ENCODE measurements at regions of chr6 and their contacts with region 1.

Region 1: DNA sequence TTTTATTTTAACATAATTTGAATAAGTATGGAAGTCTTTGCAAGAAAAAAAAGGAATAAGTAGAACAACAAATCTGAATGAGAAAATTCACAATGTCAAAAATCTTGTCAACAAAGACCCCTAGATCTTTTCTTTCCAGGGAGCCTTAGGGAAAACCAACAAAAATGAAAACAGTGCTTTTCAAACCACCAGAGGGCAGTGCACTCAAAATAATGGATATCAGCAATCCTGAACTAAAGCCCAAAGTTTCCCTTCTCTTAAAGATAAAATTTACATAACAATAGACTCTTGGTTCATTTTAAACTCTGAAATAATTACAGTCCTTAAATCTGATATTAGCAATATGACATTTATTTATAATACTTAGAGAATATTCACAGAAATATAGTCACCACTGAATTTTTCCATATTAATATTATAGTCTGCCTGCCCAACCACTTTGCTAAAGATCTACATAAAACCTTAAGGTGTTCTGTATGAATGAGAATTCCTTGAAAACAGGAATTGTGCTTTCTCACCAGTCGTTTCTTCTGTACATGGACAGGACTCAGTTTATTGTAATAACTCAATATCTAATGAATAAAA is 105.3 kb upstream of the BMP5 start:
- DNase-seq: no peak
- H3K4me3 ChIP-seq: no peak overlapping the region
- H3K27ac ChIP-seq: no peak overlapping the region
- H3K4me1 ChIP-seq: no peaks in the 10 kb centered on the region
- H3K27me3 ChIP-seq: no peaks in the 10 kb centered on the region
- CTCF ChIP-seq: peak; percentile 60 to 74 (median 69)
- POLR2A ChIP-seq: no peak

Region 2: GRCh38 chr6:56764081-56764566 is 783.4 kb after region 1 on chr6:
- intact Hi-C with region 1: loop called (anchors 10 kb)
- DNase-seq: no peak
- H3K4me3 ChIP-seq: no peak overlapping the region
- H3K27ac ChIP-seq: no peak overlapping the region
- H3K4me1 ChIP-seq: no peaks in the 10 kb centered on the region
- H3K27me3 ChIP-seq: no peaks in the 10 kb centered on the region
- CTCF ChIP-seq: peak in 2 of 3 donors; percentile 12 to 28
- POLR2A ChIP-seq: no peak

Measured in breast epithelium (tissue), 4 donors.